AG04450 (cell line): ENCODE measurements at regions of chr15 and their contacts with region 1.

Region 1: GRCh38 chr15:42528970-42529369 is 19.6 kb downstream of the LRRC57 start:
- DNase-seq: no peak
- H3K4me3 ChIP-seq: no peak overlapping the region
- H3K27ac ChIP-seq: no peak overlapping the region
- H3K27me3 ChIP-seq: no peaks in the 10 kb centered on the region
- CTCF ChIP-seq: no peak

Region 2: DNA sequence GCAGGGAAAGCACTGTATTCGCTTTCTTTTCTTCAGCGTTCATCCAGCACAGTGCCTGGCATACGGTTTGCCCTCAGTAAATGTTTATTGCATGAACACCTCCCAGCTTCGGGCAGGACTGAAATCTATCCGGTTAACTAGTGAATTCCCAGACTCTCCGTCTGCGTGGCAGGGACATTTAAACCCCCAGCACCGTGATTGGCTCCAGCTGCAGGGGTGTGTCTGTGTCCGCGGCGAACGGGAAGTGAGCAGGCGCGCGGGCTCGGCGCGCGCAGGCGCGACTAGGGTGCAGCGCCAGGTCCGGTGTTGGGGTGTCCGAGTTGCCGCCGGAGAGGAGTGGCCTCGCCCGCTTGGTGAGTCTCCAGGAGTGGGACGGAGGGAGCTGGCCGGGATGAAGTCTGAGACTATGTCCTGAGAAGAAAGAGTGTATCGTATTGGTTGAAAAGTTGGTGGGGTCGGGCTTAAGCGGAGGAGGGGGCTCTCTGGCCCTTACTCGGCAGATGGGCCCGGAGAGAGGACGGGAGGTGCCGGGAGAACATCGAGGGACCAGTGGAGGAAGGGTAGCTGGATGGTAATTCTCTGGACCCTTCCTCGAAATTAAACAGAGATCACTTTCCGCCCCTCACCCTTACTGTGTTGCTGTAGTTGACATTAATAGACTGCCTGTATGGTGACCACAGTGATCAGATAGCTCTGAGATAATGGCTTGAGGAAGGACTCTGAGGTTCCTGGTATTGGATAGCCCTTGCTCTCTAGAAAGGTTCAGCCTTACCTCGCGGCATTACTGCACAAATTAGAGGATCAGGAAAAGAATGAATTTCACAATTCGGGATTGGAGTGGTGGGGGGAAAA is 33.4 kb before region 1 on chr15 and contains the start of gene SNAP23:
- CTCF ChIA-PET with region 1: no interaction called
- POLR2A ChIA-PET with region 1: interaction called, 16 read pairs
- DNase-seq: peak; percentile 91
- H3K4me3 ChIP-seq: peak within 1 kb of the TSS; percentile 90
- H3K27ac ChIP-seq: peak within 1 kb of the TSS; percentile 91
- H3K27me3 ChIP-seq: no peaks in the 10 kb centered on the region
- CTCF ChIP-seq: no peak
- polyA plus RNA-seq, gene SNAP23: 65.9 and 83.7 TPM in 2 replicates

Region 3: DNA sequence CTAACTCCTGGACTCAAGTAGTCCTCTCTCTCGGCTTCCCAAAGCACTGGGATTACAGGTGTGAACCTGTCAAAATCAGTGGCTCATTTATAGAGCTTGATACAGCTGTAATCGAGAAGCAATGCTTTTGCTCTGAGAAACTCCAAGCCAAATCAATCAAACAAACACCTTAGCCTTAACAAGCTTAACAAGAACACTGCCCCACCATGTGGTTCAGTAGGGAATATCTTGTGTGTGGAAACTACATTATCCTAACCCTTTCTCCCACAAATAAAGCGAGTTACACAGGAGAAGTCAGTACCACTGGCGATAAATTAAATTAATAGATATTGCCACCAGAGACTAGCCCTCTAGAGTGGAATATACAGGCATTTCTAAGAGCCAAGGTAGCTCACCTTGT is 194.1 kb after region 1 on chr15:
- CTCF ChIA-PET with region 1: no interaction called
- POLR2A ChIA-PET with region 1: no interaction called
- DNase-seq: no peak
- H3K4me3 ChIP-seq: no peak overlapping the region
- H3K27ac ChIP-seq: no peak overlapping the region
- H3K27me3 ChIP-seq: no peaks in the 10 kb centered on the region
- CTCF ChIP-seq: no peak